ENCODE measurements at regions of chr12 and their contacts with region 1.

Region 1: GRCh38 chr12:13211859-13212664 is 15.5 kb downstream of the EMP1 start:
- DNase-seq: peak; percentile 45 to 85 (median 72)
- ATAC-seq: peak; percentile 86
- H3K4me3 ChIP-seq: no peak overlapping the region
- H3K4me3 Mint-ChIP-seq: no peak overlapping the region
- H3K27ac ChIP-seq: no peak overlapping the region
- H3K27ac Mint-ChIP-seq: no peak overlapping the region
- H3K4me1 ChIP-seq: no peaks in the 10 kb centered on the region
- H3K4me1 Mint-ChIP-seq: peaks cover 6% of the 10 kb centered on the region
- H3K27me3 ChIP-seq: no peaks in the 10 kb centered on the region
- H3K27me3 Mint-ChIP-seq: peaks cover 7% of the 10 kb centered on the region
- CTCF ChIP-seq: peak; percentile 85

Region 2: GRCh38 chr12:12376646-12377448 is 835.2 kb before region 1 on chr12:
- CTCF ChIA-PET with region 1: no interaction called
- POLR2A ChIA-PET with region 1: no interaction called
- intact Hi-C with region 1: loop called in 1 of 2 experiments (anchors 5 kb)
- DNase-seq: peak in 3 of 9 experiments; percentile 37 to 87 (median 76)
- ATAC-seq: peak; percentile 39
- H3K4me3 ChIP-seq: no peak overlapping the region
- H3K4me3 Mint-ChIP-seq: no peak overlapping the region
- H3K27ac ChIP-seq: no peak overlapping the region
- H3K27ac Mint-ChIP-seq: peak overlapping the region; percentile 60
- H3K4me1 ChIP-seq: peaks cover 21% of the 10 kb centered on the region
- H3K4me1 Mint-ChIP-seq: peaks cover 37% of the 10 kb centered on the region
- H3K27me3 ChIP-seq: no peaks in the 10 kb centered on the region
- H3K27me3 Mint-ChIP-seq: no peaks in the 10 kb centered on the region
- CTCF ChIP-seq: peak; percentile 79

Region 3: DNA sequence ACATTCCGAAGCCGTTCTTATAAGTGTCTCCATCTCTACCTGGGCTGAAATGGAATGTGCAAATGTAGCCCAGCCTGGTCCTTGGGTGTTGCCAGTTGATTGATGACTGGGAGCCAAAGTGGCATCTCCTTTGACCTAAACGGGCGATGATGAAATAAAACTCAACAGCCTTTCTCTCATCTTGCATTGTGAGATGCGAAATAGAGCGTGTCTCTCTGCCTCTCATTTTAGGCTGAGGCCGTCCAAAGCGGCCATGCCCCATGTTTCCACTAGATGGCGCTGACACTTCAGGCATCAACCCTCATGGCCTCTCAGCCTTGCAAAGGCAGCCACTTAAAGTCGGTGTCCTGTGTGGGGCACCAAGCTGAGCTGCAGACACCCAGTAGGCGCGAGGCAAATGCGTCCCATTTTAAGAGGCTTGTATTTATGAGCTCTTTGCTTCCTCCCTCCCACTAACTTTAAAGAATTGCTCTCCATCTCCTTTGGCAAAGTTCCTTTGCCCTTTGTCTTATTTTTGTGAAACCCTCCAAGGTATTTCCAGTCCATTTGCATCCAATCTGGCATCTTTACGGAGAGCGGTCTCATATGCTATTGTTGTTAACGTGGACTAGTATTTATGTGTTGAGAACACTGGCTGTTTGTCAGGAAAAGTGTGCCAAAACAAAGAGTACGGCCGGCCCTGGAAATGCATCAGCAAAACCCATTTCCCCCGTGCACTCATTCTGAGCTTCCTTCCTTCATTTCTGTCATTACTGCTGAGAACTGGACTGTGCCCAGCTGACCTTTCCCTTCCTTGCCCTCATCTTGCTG is 295.7 kb before region 1 on chr12:
- CTCF ChIA-PET with region 1: interaction called, 111 read pairs
- POLR2A ChIA-PET with region 1: interaction called, 4 read pairs
- intact Hi-C with region 1: loop called (anchors 1 kb)
- DNase-seq: peak; percentile 72 to 92 (median 82)
- ATAC-seq: peak; percentile 99
- H3K4me3 ChIP-seq: no peak overlapping the region
- H3K4me3 Mint-ChIP-seq: peak overlapping the region; percentile 4
- H3K27ac ChIP-seq: no peak overlapping the region
- H3K27ac Mint-ChIP-seq: no peak overlapping the region
- H3K4me1 ChIP-seq: peaks cover 4% of the 10 kb centered on the region
- H3K4me1 Mint-ChIP-seq: peaks cover 9% of the 10 kb centered on the region
- H3K27me3 ChIP-seq: peaks cover 0 to 7% of the 10 kb centered on the region in 2 experiments
- H3K27me3 Mint-ChIP-seq: peaks cover 19% of the 10 kb centered on the region
- CTCF ChIP-seq: peak; percentile 82

Region 4: GRCh38 chr12:13044002-13044905 is 167.8 kb before region 1 on chr12 and contains the start of gene FAM234B:
- CTCF ChIA-PET with region 1: interaction called, 11 read pairs
- POLR2A ChIA-PET with region 1: no interaction called
- intact Hi-C with region 1: no loop called
- DNase-seq: peak; percentile 44 to 84 (median 71)
- ATAC-seq: peak; percentile 96
- H3K4me3 ChIP-seq: peak within 1 kb of the TSS; percentile 69 to 96
- H3K4me3 Mint-ChIP-seq: peak within 1 kb of the TSS; percentile 86
- H3K27ac ChIP-seq: peak within 1 kb of the TSS in 1 of 2 experiments; percentile 56
- H3K27ac Mint-ChIP-seq: peak within 1 kb of the TSS; percentile 63
- H3K4me1 ChIP-seq: peaks cover 5% of the 10 kb centered on the region
- H3K4me1 Mint-ChIP-seq: peaks cover 21% of the 10 kb centered on the region
- H3K27me3 ChIP-seq: no peaks in the 10 kb centered on the region
- H3K27me3 Mint-ChIP-seq: no peaks in the 10 kb centered on the region
- CTCF ChIP-seq: peak; percentile 13
- total RNA-seq, gene FAM234B: 2.2 to 2.7 TPM

Region 5: DNA sequence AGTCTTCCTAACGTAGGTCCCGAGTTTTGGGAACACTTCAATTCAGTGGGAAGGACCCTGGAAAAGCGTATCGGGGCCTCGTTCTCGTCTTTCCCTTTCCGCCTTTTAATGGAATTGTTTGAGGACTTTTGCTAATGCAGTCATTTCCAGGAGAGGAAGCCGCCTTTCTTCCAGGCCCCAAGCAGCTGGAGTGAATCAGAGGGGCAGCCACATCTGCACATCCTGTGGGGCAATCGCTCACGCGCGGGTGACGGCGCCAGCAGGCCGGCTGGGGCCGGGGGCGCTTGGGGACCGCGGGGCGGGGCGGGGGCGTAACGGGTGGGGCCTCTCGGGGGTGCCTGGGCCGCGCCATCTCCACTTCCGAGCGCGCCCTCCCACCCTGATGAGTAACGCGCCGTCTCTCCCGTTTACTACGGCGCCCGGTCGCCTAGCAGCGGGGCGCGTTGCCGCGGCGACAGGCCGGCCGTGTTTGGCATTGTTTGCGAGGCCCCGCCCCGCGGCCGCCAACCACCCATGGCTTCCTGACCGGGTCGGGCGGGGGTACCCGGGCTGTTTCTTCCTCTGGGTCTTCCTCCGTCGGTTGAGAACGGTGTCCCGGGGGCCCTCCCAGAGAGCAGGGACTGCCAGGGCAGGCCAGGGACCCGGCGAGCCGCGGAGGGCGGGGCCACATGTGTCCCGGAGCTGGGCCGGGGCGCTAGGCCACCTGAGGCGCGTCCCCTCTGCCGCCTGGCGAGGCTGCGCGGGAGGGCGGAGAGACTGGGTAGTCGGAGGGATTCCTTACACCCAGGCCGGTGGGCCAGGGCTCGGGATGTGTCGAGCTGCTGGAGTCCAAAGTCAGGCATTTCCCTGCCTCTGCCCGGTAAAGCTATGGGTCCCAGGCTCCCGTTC is 110.9 kb before region 1 on chr12:
- CTCF ChIA-PET with region 1: interaction called, 157 read pairs
- POLR2A ChIA-PET with region 1: interaction called, 6 read pairs
- intact Hi-C with region 1: loop called (anchors 1 kb)
- DNase-seq: peak; percentile 86 to 97 (median 93)
- ATAC-seq: peak; percentile 87
- H3K4me3 ChIP-seq: peak overlapping the region; percentile 55 to 77
- H3K4me3 Mint-ChIP-seq: peak overlapping the region; percentile 81
- H3K27ac ChIP-seq: peak overlapping the region; percentile 83 to 95
- H3K27ac Mint-ChIP-seq: peak overlapping the region; percentile 89
- H3K4me1 ChIP-seq: peaks cover 27% of the 10 kb centered on the region
- H3K4me1 Mint-ChIP-seq: peaks cover 36% of the 10 kb centered on the region
- H3K27me3 ChIP-seq: no peaks in the 10 kb centered on the region
- H3K27me3 Mint-ChIP-seq: no peaks in the 10 kb centered on the region
- CTCF ChIP-seq: no peak

Region 6: DNA sequence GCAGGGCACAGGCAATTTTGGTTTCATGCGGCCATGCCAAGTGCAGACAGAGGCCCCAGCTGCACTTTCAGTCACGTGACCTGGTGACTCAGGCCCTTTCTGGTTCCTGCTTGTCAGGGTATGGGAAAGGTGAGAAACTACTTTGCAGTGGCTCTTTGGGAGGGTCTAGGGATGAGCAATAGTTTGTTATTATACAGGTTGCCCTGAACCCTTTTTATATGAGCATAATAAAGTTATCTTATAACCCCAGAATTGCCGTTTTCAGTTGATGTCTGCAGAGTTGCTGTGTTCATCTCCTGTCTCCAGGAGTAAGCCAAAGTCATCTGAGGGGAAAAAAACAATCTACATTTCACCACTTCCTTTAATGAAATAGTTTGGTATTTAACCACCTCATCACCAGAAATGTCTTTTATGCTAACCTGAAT is 46.4 kb before region 1 on chr12:
- CTCF ChIA-PET with region 1: interaction called, 4 read pairs
- POLR2A ChIA-PET with region 1: no interaction called
- intact Hi-C with region 1: loop called in 1 of 2 experiments (anchors 5 kb)
- DNase-seq: peak in 8 of 9 experiments; percentile 58 to 80 (median 70)
- ATAC-seq: peak; percentile 82
- H3K4me3 ChIP-seq: peak overlapping the region in 1 of 2 experiments; percentile 2
- H3K4me3 Mint-ChIP-seq: peak overlapping the region; percentile 1
- H3K27ac ChIP-seq: no peak overlapping the region
- H3K27ac Mint-ChIP-seq: peak overlapping the region; percentile 49
- H3K4me1 ChIP-seq: peaks cover 16% of the 10 kb centered on the region
- H3K4me1 Mint-ChIP-seq: peaks cover 20% of the 10 kb centered on the region
- H3K27me3 ChIP-seq: no peaks in the 10 kb centered on the region
- H3K27me3 Mint-ChIP-seq: no peaks in the 10 kb centered on the region
- CTCF ChIP-seq: no peak

Region 7: DNA sequence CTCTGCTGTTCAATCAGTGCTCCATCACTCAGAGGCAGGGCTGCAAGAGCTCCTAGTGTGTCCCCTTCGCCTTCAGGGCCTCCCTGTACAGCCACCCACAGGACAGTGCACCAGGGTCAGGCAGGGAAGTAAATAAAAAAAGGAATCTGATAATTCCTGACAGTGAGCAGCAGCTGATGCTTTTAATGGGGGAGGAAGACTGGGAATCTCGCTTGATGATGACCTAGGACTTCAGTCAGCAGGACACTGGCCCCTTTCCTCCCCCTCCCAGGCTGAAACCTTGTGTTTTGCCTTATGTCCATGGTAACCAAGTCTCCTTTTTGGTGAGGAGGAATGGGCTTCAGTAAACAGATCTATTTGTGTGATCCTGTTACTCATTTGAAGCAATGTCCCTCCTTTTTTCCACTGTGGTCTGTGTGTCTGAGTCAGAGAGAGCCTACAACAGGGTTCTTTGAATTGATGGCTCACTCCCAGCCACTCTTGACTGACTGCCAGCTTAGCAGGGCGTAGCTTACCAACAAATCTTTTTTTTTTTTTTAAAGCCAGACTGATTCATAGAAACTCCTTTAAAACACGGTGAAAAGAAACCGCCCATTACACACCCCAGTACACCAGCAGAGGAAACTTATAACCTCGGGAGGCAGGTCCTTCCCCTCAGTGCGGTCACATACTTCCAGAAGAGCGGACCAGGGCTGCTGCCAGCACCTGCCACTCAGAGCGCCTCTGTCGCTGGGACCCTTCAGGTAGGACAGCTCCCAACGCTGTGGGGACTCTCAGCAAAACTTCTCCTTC is 15.7 kb before region 1 on chr12 and contains the start of gene EMP1:
- CTCF ChIA-PET with region 1: interaction called, 42 read pairs
- POLR2A ChIA-PET with region 1: no interaction called
- intact Hi-C with region 1: no loop called
- DNase-seq: peak; percentile 10 to 85 (median 67)
- ATAC-seq: peak; percentile 90
- H3K4me3 ChIP-seq: peak within 1 kb of the TSS; percentile 23 to 44
- H3K4me3 Mint-ChIP-seq: peak within 1 kb of the TSS; percentile 76
- H3K27ac ChIP-seq: no peak within 1 kb of the TSS
- H3K27ac Mint-ChIP-seq: peak within 1 kb of the TSS; percentile 34
- H3K4me1 ChIP-seq: peaks cover 14% of the 10 kb centered on the region
- H3K4me1 Mint-ChIP-seq: peaks cover 18% of the 10 kb centered on the region
- H3K27me3 ChIP-seq: no peaks in the 10 kb centered on the region
- H3K27me3 Mint-ChIP-seq: no peaks in the 10 kb centered on the region
- CTCF ChIP-seq: no peak
- total RNA-seq, gene EMP1: 4.4 to 5.0 TPM